Psoas muscle (tissue), 8 donors: ENCODE measurements at regions of chr2 and their contacts with region 1.

Region 1: DNA sequence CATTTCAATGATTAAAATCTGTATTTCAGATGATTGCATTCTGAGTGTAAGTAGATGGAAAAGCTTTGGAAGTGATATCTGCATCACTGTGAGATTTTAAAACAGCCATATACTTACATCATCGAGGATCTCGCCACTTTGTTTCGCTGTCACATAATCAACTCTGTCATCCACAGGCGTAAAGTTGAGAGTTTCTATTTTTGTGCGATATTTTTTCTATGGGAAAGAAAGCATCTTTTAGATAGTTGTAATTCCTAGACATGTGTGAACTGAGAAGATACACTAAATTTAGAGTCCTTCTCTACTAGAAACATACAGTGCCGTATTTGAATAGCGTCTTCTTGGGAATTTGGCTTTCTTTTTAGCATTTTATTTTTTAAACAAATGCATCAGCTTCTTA is 158.8 kb downstream of the RIF1 start:
- DNase-seq: no peak
- ATAC-seq: no peak
- H3K4me3 ChIP-seq: no peak overlapping the region
- H3K27ac ChIP-seq: peak overlapping the region; percentile 79
- H3K4me1 ChIP-seq: no peaks in the 10 kb centered on the region
- H3K27me3 ChIP-seq: no peaks in the 10 kb centered on the region
- CTCF ChIP-seq: no peak

Region 2: DNA sequence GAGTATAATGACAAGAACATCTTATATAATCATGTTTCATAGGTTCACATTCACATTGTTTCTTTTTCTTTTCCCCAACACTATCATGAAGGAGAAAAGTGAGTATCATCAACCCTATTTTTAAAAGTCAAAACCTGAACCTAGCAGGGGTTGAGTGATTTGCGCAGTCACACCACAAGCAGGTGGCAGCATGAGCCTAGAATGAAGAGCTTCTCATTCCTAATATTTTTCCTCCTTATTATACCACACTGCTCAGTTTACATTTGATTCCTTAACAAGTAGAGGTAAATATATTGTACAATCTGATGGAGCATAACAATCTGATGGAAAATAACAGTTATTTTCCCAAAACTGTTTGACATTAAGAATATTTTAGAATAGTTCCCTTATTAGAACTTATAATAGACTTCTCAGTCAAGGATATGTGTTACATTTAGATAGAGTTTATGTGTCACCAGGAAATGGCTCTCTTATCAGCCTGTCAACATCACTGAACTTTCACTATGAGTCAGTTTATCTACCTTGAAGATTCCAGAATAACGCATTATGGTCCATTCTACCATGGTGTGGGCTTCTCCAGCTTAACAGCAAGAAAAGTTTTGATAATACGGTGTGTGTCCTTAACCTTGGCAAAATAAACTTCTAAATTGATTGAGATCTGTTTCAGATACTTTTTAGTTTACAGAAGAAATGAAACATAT is 46.3 kb after region 1 on chr2:
- intact Hi-C with region 1: loop called in 1 of 2 experiments (anchors 1 kb)
- DNase-seq: no peak
- ATAC-seq: no peak
- H3K4me3 ChIP-seq: no peak overlapping the region
- H3K27ac ChIP-seq: peak overlapping the region; percentile 41
- H3K4me1 ChIP-seq: peaks cover 44% of the 10 kb centered on the region
- H3K27me3 ChIP-seq: no peaks in the 10 kb centered on the region
- CTCF ChIP-seq: no peak